ENCODE measurements at regions of chr2 and their contacts with region 1.

Region 1: DNA sequence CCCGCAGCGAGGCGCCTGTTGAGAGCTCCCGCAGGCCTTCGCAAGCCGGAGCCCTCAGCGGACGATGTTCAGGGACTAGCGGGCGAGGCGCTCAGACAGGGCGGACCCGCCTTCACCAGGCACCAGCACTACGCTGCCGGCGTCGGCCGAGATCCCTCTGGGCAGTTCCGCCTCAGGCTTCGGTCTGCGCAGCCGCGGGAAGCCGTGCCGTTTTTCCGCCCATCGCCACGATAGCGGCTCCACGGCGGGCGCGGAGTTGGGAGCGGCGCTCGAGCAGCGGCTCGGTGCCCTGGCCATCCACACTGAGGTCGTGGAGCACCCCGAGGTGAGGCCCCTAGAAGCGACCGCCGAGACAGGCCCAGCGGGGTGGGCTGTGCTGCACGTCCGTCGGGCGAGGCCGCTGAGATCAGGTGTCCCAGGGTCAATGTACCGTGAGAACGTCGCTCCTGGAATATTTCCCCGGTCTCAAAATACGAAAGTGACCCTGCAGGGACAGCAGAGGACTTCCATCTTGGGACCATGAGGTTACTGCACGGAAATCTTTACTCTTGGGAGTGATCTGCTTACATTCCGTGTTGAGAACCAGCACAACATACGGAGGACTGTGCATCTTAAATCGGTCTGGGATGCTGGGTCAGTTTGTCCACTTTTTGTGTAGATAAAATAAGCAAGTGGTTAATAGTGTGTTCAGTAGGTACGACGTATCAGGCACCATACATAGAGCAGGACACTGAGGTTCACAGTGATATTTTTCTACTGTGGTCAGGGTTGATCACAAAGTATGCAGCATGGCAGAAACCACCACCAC is 13.3 kb upstream of the MTIF2 start:
- DNase-seq: peak; percentile 91
- ATAC-seq: peak; percentile 99
- H3K4me3 ChIP-seq: peak overlapping the region; percentile 76 to 92 (median 87)
- H3K4me3 Mint-ChIP-seq: peak overlapping the region; percentile 93
- H3K27ac ChIP-seq: peak overlapping the region; percentile 82 to 89
- H3K27ac Mint-ChIP-seq: peak overlapping the region; percentile 99
- H3K4me1 ChIP-seq: peaks cover 11 to 18% of the 10 kb centered on the region in 2 donors
- H3K4me1 Mint-ChIP-seq: peaks cover 24% of the 10 kb centered on the region
- H3K27me3 ChIP-seq: no peaks in the 10 kb centered on the region
- H3K27me3 Mint-ChIP-seq: no peaks in the 10 kb centered on the region
- CTCF ChIP-seq: no peak

Region 2: DNA sequence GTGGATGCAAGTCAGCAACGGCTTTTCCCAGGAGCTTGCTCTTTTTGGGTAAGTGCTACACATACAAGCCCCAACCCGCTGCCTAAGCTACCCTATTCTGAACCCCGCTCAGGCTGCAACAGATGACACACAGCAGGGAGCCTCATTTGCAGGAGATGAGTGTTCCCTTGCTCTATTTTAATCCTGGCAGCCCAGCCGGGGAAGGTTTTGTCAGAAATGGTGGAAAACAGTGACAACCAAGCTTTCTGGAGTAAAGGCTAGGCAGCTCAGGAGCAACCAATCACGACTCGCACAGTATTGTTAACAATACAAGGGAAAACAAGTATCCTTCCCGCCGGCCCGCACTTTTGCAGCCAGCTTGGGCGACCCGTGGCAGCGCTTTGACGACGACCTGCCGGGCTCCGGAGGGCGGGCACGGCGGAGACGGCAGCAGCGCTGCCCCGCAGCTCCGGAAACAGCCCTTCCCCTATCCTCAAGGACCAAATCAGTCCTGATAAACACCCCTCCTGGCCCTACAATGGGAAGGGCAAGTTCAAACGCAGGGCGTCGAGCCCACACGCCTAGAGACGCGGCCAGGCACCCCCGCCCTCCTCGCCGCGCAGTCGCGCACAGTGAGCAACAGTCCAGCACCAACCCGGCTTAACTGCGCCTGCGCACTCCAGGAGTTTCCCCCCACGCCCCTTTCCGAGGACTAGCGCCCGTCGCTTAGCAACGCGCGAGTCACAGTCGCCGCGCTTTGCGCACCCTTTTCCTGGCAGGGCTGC is 952.0 kb before region 1 on chr2:
- CTCF ChIA-PET with region 1: no interaction called
- POLR2A ChIA-PET with region 1: no interaction called
- intact Hi-C with region 1: loop called (anchors 2 kb)
- DNase-seq: peak; percentile 93
- ATAC-seq: peak; percentile 94
- H3K4me3 ChIP-seq: peak overlapping the region; percentile 51 to 67 (median 57)
- H3K4me3 Mint-ChIP-seq: peak overlapping the region; percentile 94
- H3K27ac ChIP-seq: peak overlapping the region in 1 of 2 donors; percentile 29
- H3K27ac Mint-ChIP-seq: peak overlapping the region; percentile 91
- H3K4me1 ChIP-seq: peaks cover 21 to 23% of the 10 kb centered on the region in 2 donors
- H3K4me1 Mint-ChIP-seq: peaks cover 18% of the 10 kb centered on the region
- H3K27me3 ChIP-seq: peaks cover 0 to 23% (median 10%) of the 10 kb centered on the region in 4 experiments
- H3K27me3 Mint-ChIP-seq: peaks cover 19% of the 10 kb centered on the region
- CTCF ChIP-seq: no peak

Region 3: DNA sequence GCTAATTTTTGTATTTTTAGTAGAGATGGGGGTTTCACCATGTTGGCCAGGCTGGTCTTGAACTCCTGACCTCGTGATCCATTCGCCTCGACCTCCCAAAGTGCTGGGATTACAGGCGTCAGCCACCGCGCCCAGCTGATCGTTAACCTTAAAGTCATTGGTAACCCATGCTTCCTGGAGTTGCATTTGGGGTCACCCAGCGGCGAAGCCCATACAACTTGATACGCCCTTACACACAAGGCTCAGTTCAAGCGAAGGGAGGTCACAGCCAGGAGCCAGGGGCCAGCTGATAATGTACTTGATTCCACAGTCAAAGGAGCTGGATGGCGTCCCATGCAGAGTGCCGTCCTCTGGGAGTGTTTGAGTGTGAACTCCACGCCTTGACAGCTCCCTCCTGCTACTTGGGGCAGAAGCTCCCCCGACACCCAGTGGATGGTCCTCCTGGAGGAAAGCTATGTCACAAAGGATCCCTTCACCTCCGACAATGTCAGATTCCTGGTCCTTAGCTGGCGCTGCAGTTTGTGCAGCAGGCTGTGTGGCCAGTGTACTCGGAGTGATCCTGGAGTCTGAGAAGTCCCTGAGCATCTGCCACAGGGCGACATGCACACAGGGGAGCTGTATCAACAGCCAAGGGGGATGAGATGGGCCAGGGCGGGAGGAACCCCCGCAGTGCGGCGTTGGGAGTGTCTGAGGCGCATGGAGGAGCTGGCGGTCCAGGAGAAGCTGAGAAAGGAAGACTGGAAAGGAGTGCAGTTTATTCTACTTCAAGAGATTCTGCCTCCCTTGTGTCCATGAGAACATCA is 58.2 kb before region 1 on chr2:
- CTCF ChIA-PET with region 1: no interaction called
- POLR2A ChIA-PET with region 1: no interaction called
- intact Hi-C with region 1: loop called (anchors 2 kb)
- DNase-seq: peak; percentile 50
- ATAC-seq: no peak
- H3K4me3 ChIP-seq: peak overlapping the region in 4 of 5 experiments; percentile 54 to 73 (median 68)
- H3K4me3 Mint-ChIP-seq: peak overlapping the region; percentile 83
- H3K27ac ChIP-seq: peak overlapping the region; percentile 77 to 86
- H3K27ac Mint-ChIP-seq: peak overlapping the region; percentile 90
- H3K4me1 ChIP-seq: peaks cover 16 to 24% of the 10 kb centered on the region in 2 donors
- H3K4me1 Mint-ChIP-seq: peaks cover 26% of the 10 kb centered on the region
- H3K27me3 ChIP-seq: no peaks in the 10 kb centered on the region
- H3K27me3 Mint-ChIP-seq: no peaks in the 10 kb centered on the region
- CTCF ChIP-seq: no peak

Region 4: DNA sequence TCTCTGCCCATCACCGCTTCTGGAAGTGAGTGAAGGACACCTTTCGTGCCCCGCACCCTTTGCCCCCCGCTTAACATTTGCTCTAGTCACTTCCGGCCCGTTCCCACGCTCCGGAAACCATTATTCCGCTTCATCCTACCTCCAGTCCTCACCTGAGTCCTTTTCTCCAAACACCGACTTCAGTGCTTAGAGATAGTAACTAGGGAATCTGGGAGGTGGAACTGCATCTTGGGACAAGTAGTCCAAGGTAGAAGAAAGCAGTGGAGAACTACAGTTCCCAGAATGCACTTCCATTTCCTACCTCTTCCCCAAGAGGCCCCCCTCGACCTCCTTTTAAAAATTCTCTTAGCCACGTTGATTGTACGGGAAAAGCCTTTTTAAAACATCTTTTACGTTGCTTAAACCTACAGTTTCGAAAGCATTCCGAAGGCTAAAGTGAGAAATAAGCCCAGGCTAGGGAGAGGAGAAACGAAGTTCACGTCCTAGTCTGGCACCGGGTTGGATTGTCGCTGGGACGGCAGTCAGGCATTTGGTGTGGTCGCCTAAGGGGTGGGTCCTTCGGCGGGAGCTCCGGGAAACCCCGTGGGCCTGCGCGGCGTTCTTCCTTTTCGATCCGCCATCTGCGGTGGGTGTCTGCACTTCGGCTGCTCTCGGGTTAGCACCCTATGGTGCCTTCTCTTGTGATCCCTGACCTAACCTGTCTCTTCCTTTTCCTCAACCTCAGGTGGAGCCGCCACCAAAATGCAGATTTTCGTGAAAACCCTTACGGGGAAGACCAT is 50.0 kb before region 1 on chr2 and contains the starts of genes CLHC1 and RPS27A:
- CTCF ChIA-PET with region 1: no interaction called
- POLR2A ChIA-PET with region 1: interaction called, 4 read pairs
- intact Hi-C with region 1: loop called (anchors 1 kb)
- DNase-seq: peak; percentile 97
- ATAC-seq: peak; percentile 87
- H3K4me3 ChIP-seq: peak within 1 kb of the TSS; percentile 72 to 98 (median 94)
- H3K4me3 Mint-ChIP-seq: peak within 1 kb of the TSS; percentile 94
- H3K27ac ChIP-seq: peak within 1 kb of the TSS; percentile 95 to 98
- H3K27ac Mint-ChIP-seq: peak within 1 kb of the TSS; percentile 99
- H3K4me1 ChIP-seq: peaks cover 28 to 39% of the 10 kb centered on the region in 2 donors
- H3K4me1 Mint-ChIP-seq: peaks cover 54% of the 10 kb centered on the region
- H3K27me3 ChIP-seq: no peaks in the 10 kb centered on the region
- H3K27me3 Mint-ChIP-seq: no peaks in the 10 kb centered on the region
- CTCF ChIP-seq: no peak
- total RNA-seq, gene CLHC1: 12.0 and 12.8 TPM in 2 replicates
- total RNA-seq, gene RPS27A: 1,561 and 1,678 TPM in 2 replicates

Region 5: GRCh38 chr2:55268907-55269644 is 13.2 kb before region 1 on chr2 and contains the start of gene MTIF2:
- CTCF ChIA-PET with region 1: no interaction called
- POLR2A ChIA-PET with region 1: no interaction called
- intact Hi-C with region 1: loop called (anchors 1 kb)
- DNase-seq: peak; percentile 91
- ATAC-seq: peak; percentile 90
- H3K4me3 ChIP-seq: peak within 1 kb of the TSS; percentile 70 to 92 (median 82)
- H3K4me3 Mint-ChIP-seq: peak within 1 kb of the TSS; percentile 97
- H3K27ac ChIP-seq: peak within 1 kb of the TSS; percentile 78 to 83
- H3K27ac Mint-ChIP-seq: peak within 1 kb of the TSS; percentile 95
- H3K4me1 ChIP-seq: peaks cover 12 to 14% of the 10 kb centered on the region in 2 donors
- H3K4me1 Mint-ChIP-seq: peaks cover 18% of the 10 kb centered on the region
- H3K27me3 ChIP-seq: no peaks in the 10 kb centered on the region
- H3K27me3 Mint-ChIP-seq: no peaks in the 10 kb centered on the region
- CTCF ChIP-seq: no peak
- total RNA-seq, gene MTIF2: 36.7 and 37.4 TPM in 2 replicates

Region 6: GRCh38 chr2:55419679-55420438 is 137.5 kb after region 1 on chr2 and contains the start of gene CCDC88A:
- CTCF ChIA-PET with region 1: no interaction called
- POLR2A ChIA-PET with region 1: no interaction called
- intact Hi-C with region 1: loop called (anchors 1 kb)
- DNase-seq: peak; percentile 95
- ATAC-seq: peak; percentile 85
- H3K4me3 ChIP-seq: peak within 1 kb of the TSS; percentile 65 to 91 (median 82)
- H3K4me3 Mint-ChIP-seq: peak within 1 kb of the TSS; percentile 95
- H3K27ac ChIP-seq: peak within 1 kb of the TSS; percentile 68 to 73
- H3K27ac Mint-ChIP-seq: peak within 1 kb of the TSS; percentile 95
- H3K4me1 ChIP-seq: peaks cover 20 to 25% of the 10 kb centered on the region in 2 donors
- H3K4me1 Mint-ChIP-seq: peaks cover 38% of the 10 kb centered on the region
- H3K27me3 ChIP-seq: peaks cover 0 to 4% (median 0%) of the 10 kb centered on the region in 4 experiments
- H3K27me3 Mint-ChIP-seq: no peaks in the 10 kb centered on the region
- CTCF ChIP-seq: no peak
- total RNA-seq, gene CCDC88A: 26.0 and 27.6 TPM in 2 replicates

Region 7: GRCh38 chr2:55431982-55432627 is 149.8 kb after region 1 on chr2:
- CTCF ChIA-PET with region 1: interaction called, 3 read pairs
- POLR2A ChIA-PET with region 1: no interaction called
- intact Hi-C with region 1: loop called (anchors 5 kb)
- DNase-seq: peak; percentile 45
- ATAC-seq: peak; percentile 24
- H3K4me3 ChIP-seq: no peak overlapping the region
- H3K4me3 Mint-ChIP-seq: no peak overlapping the region
- H3K27ac ChIP-seq: no peak overlapping the region
- H3K27ac Mint-ChIP-seq: no peak overlapping the region
- H3K4me1 ChIP-seq: no peaks in the 10 kb centered on the region
- H3K4me1 Mint-ChIP-seq: no peaks in the 10 kb centered on the region
- H3K27me3 ChIP-seq: no peaks in the 10 kb centered on the region
- H3K27me3 Mint-ChIP-seq: no peaks in the 10 kb centered on the region
- CTCF ChIP-seq: peak; percentile 71

Measured in B cell (primary cell).